ENCODE measurements at regions of chr17 and their contacts with region 1.

Region 1: DNA sequence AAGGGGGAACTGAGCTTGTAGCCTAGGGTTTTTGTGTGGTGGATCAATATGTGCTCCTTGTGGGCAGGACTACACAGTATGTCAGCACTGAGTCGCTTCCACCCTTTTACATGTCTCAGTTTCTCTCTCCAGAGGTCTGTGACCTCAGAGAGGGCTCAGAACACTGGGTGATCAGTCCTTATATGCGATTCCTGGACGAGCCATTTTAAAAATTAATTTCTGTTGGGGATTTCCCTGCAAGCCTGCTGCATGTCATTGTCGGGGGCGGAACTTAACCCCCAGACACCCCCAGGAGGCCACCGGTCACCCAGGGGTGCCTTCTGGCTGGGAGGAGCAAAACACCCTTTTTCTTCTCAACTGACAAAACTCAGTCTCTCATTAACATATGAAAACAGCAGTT is 14.1 kb downstream of the DHRS7B start:
- DNase-seq: no peak
- ATAC-seq: no peak
- H3K4me3 ChIP-seq: no peak overlapping the region
- H3K4me1 ChIP-seq: no peaks in the 10 kb centered on the region
- CTCF ChIP-seq: no peak

Region 2: DNA sequence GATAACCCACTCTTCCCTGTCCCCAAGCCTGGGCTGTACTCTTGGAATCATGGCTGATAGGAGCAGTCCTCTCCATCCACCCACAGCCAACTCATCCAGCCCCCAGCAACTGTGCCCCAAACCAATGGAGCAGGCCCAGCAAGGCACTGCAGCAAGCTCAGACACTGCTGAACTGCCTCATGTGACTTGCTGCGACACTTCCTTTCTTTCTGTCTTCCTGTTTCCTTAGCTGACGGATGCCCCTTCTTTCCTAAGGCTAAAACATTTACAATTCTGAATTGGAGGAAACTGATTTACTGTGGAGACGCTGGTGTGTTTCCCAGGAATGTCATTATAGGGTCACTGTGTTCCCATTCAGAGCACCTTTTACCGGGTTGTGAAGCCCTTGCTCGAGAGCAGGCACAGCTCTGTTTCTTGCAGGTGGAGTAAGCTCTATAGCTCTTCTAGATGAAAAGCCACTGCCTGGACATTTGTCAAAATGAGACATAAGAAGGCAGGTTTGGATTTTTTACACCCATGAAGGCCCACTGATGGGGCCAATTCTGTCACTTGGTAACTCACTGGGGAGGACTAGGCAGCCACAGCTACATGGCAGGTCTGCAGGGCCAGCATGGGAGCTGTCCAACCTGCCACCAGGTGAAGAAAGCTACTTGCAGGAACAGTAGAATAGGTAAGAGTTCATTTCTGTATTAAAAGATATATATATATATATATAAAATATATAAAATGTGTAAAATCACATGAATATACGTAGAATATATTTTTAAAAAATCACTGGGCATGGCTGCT is 45.7 kb after region 1 on chr17:
- intact Hi-C with region 1: loop called in 1 of 2 experiments (anchors 2 kb)
- DNase-seq: no peak
- ATAC-seq: no peak
- H3K4me3 ChIP-seq: no peak overlapping the region
- H3K4me1 ChIP-seq: no peaks in the 10 kb centered on the region
- CTCF ChIP-seq: no peak

Measured in mucosa of descending colon (tissue), 3 donors.